ENCODE measurements at regions of chr7 and their contacts with region 1.

Region 1: GRCh38 chr7:137898839-137899721 is 52.3 kb upstream of the DGKI start:
- DNase-seq: peak; percentile 81
- H3K4me3 ChIP-seq: peak overlapping the region in 1 of 4 donors; percentile 12
- H3K27ac ChIP-seq: peak overlapping the region in 3 of 4 donors; percentile 2 to 10 (median 10)
- H3K4me1 ChIP-seq: peaks cover 0 to 21% (median 9%) of the 10 kb centered on the region in 4 donors
- H3K27me3 ChIP-seq: no peaks in the 10 kb centered on the region
- CTCF ChIP-seq: peak; percentile 82 to 91 (median 91)
- EP300 ChIP-seq: no peak
- POLR2A ChIP-seq: no peak

Region 2: DNA sequence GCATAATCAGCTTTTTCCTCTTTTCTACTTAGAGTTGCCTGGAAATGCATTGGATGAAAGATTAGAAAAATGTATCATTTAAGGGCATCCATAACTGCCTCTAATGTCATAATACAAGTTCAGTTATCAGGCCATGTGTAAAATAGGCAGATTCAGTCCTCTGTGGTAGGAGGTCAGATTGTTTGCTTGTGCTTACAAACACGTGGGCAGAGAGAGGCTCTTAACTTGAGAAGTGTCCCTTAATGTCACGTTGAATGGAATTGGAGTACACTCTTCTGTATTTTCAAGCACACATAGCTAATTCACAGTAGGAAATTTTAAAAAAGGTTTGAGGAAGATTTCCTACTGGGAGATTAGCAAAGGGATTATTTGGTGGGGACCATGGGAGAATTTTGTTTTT is 1562.1 kb before region 1 on chr7:
- in situ Hi-C with region 1: no loop called
- intact Hi-C with region 1: no loop called
- DNase-seq: no peak
- H3K4me3 ChIP-seq: no peak overlapping the region
- H3K27ac ChIP-seq: no peak overlapping the region
- H3K4me1 ChIP-seq: no peaks in the 10 kb centered on the region
- H3K27me3 ChIP-seq: no peaks in the 10 kb centered on the region
- CTCF ChIP-seq: no peak
- EP300 ChIP-seq: no peak
- POLR2A ChIP-seq: no peak

Region 3: GRCh38 chr7:137661634-137662033 is 237.4 kb before region 1 on chr7:
- in situ Hi-C with region 1: loop called in 3 of 4 experiments (anchors 5 to 10 kb)
- intact Hi-C with region 1: loop called (anchors 5 kb)
- DNase-seq: no peak
- H3K4me3 ChIP-seq: no peak overlapping the region
- H3K27ac ChIP-seq: no peak overlapping the region
- H3K4me1 ChIP-seq: peaks cover 0 to 1% (median 0%) of the 10 kb centered on the region in 4 donors
- H3K27me3 ChIP-seq: no peaks in the 10 kb centered on the region
- CTCF ChIP-seq: no peak
- EP300 ChIP-seq: no peak
- POLR2A ChIP-seq: no peak

Region 4: GRCh38 chr7:138008547-138009349 is 109.7 kb after region 1 on chr7:
- in situ Hi-C with region 1: loop called in 1 of 4 experiments (anchors 5 kb)
- intact Hi-C with region 1: loop called (anchors 2 kb)
- DNase-seq: peak; percentile 24
- H3K4me3 ChIP-seq: no peak overlapping the region
- H3K27ac ChIP-seq: no peak overlapping the region
- H3K4me1 ChIP-seq: peaks cover 0 to 6% (median 2%) of the 10 kb centered on the region in 4 donors
- H3K27me3 ChIP-seq: no peaks in the 10 kb centered on the region
- CTCF ChIP-seq: peak; percentile 87 to 93 (median 91)
- EP300 ChIP-seq: no peak
- POLR2A ChIP-seq: no peak

Measured in transverse colon (tissue), 4 donors.